Cardiac septum (tissue), 1 donor: ENCODE measurements at regions of chr18 and their contacts with region 1.

Region 1: DNA sequence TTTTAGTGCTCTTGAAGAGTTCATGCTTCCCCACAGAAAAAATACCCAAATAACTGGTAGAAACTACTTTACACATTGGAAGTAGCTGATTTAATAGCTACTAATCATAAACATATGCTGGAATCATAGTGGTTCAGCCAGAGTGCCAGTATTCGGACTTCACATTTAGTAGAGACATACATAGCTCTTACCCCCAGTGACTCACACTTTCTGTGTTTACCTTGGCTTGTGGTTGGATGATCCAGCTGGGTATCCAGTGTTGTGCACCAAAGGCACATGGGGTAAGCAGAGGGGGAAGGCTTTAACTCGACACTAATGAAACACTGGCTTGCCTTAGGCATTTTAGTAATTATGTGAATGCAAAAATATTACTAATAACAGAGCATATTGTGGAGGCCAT is 18.1 kb downstream of the ARHGAP28 start:
- DNase-seq: no peak

Region 2: GRCh38 chr18:6687676-6688075 is 60.0 kb before region 1 on chr18:
- intact Hi-C with region 1: no loop called
- DNase-seq: no peak

Region 3: DNA sequence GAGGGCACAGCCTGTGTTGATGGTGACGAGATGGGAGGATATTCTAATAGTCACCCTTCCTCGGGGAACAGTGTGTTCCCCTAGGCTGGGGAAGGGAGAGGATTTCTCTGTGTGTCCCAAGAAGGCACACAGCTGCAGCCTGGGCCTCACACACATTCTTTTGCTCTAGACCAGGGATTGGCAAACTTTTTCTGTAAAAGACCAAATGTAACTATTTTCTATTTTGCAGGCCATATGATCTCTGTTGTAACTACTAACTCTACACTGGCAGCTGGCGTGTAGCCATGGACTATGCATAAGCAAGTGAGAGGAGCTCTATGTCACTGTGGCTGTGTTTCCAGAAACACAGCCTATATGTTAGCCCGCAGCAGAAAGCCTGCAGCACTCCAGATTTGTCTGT is 47.7 kb after region 1 on chr18:
- intact Hi-C with region 1: loop called (anchors 5 kb)
- DNase-seq: no peak

Region 4: GRCh38 chr18:6874316-6874715 is 126.7 kb after region 1 on chr18:
- intact Hi-C with region 1: no loop called
- DNase-seq: no peak